SK-N-SH (cell line): ENCODE measurements at regions of chr10 and their contacts with region 1.

Region 1: DNA sequence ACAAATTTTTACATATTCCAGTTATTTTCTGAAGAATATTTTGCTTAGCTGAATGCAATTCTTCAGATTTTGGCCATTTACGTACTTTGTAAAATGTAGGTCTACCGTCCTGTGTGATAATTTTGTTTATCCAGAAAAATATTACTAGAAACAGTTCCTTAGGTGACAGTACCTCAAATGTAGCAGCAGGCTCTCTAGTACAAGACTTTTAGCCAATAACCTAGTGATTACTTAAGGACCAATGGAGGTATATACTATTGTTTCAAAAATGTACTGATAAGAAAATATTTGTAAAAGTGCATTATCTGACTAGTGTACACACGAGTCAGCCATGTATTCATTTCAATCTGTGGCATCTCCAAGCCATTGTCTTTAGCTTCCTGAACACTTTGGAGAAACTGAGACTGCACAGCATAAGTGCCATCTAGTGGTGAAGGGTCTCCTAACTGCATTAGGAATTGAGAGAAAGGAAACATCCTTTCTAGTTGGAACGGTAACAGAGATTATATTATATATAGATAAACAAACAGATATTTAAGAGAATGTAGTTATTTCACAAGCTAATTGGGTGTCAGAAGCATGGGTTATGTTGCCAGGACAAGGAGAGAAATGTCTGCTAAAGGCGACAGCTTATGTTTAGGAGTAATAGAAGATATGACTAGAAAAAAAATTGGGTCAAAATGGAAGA is 23.7 kb downstream of the RTKN2 start:
- DNase-seq: peak; percentile 30
- H3K4me3 ChIP-seq: peak overlapping the region in 1 of 2 experiments; percentile 20; a peak in 1 of 4 replicates
- H3K27ac ChIP-seq: peak overlapping the region; percentile 40 to 58
- H3K4me1 ChIP-seq: peaks cover 2 to 33% of the 10 kb centered on the region in 2 experiments; a peak in 3 of 4 replicates
- H3K27me3 ChIP-seq: no peaks in the 10 kb centered on the region
- CTCF ChIP-seq: peak; percentile 96
- EP300 ChIP-seq: no peak
- RAD21 ChIP-seq: peak; percentile 97

Region 2: DNA sequence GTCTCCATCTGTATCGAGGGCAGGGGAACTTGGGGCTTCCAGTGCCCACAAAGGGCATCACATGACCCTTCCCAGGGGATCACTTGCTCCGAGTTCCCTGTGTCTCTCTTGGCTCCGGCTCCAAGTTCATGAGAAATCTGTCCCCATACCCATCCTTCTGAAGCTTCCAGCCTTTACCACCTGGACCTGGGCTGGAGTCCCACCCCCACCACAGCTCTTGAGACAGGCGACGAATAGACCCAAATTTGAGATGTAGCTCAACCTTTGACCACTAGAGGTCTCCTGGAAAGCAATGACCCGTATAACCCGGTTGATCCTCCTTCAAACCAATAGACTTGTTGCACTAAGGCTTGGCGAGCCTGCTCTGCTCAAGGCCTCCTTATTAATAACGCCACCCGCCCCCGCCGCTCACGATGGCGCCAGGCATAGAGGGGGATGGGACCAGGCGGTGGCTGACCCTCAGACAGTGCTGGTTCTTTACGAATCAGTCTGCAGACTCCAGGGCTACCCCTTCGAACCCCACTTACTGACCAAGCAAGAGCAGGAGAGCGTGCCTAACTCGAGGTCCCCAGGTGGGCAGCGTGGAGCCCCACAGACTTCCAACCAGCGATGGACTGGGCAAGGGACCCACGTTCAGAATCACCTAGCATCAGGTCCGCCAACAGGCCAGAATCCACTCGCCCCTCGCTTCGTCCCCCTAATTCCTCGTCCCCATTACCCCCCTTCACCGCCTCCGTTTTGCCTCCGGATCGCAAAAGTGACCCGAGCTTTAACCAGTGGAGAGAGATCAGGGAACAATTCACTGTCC is 347.9 kb before region 1 on chr10:
- CTCF ChIA-PET with region 1: interaction called, 36 read pairs
- POLR2A ChIA-PET with region 1: no interaction called
- DNase-seq: peak; percentile 67
- H3K4me3 ChIP-seq: no peak overlapping the region; a peak in 1 of 4 replicates
- H3K27ac ChIP-seq: peak overlapping the region in 1 of 2 experiments; percentile 99; a peak in 2 of 4 replicates
- H3K4me1 ChIP-seq: peaks cover 16 to 21% of the 10 kb centered on the region in 2 experiments; a peak in 3 of 4 replicates
- H3K27me3 ChIP-seq: no peaks in the 10 kb centered on the region
- CTCF ChIP-seq: peak; percentile 62
- EP300 ChIP-seq: no peak
- RAD21 ChIP-seq: peak; percentile 54

Region 3: DNA sequence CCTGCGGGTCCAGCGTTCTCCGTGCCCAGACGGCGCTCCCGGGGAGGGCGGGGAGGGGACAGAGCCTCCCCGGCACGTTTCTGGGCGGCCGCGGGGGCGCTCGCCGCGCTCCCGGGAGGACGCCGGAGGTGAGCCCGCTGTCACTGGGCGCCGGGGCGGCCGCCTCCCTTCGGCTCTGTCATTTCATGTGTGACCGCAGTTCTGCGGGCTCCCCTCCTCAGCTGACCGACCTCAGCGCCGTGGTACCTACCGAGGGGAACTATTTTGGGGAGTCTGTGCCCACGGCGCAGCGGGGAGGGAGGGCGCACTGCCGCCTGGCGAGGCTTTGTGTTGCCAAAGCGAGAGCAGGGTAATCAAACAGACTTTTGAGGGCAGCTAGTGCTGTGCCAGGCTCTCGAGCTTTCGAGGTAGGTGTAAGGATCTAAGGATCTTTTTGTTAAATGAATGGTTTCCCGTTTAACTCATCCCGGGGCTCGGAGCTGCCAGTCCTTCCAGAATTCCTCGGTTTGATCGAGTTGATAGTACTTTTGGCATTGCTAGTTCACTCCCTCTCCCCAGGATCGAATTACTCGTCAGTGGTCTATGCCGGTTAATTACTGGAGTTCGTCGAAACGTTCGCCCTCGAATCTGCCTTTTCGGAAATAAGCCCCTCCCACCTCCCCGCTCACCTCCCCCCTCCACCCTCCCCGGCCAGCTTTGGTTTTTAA is 341.6 kb before region 1 on chr10:
- CTCF ChIA-PET with region 1: interaction called, 36 read pairs
- POLR2A ChIA-PET with region 1: no interaction called
- DNase-seq: peak; percentile 78
- H3K4me3 ChIP-seq: peak overlapping the region; percentile 67 to 84
- H3K27ac ChIP-seq: peak overlapping the region; percentile 87 to 95
- H3K4me1 ChIP-seq: peaks cover 15 to 22% of the 10 kb centered on the region in 2 experiments; a peak in 3 of 4 replicates
- H3K27me3 ChIP-seq: no peaks in the 10 kb centered on the region
- CTCF ChIP-seq: peak; percentile 43
- EP300 ChIP-seq: no peak
- RAD21 ChIP-seq: no peak; the same call in 1 of the 2 replicates

Region 4: GRCh38 chr10:62059217-62059920 is 185.6 kb before region 1 on chr10:
- CTCF ChIA-PET with region 1: interaction called, 15 read pairs
- POLR2A ChIA-PET with region 1: no interaction called
- DNase-seq: no peak
- H3K4me3 ChIP-seq: no peak overlapping the region
- H3K27ac ChIP-seq: peak overlapping the region; percentile 73 to 94
- H3K4me1 ChIP-seq: peaks cover 42 to 81% of the 10 kb centered on the region in 2 experiments
- H3K27me3 ChIP-seq: no peaks in the 10 kb centered on the region
- CTCF ChIP-seq: no peak
- EP300 ChIP-seq: peak; percentile 35 to 72; a peak in 3 of 4 replicates
- RAD21 ChIP-seq: no peak

Region 5: GRCh38 chr10:62264702-62265436 is 19.9 kb after region 1 on chr10:
- CTCF ChIA-PET with region 1: interaction called, 17 read pairs
- POLR2A ChIA-PET with region 1: no interaction called
- DNase-seq: peak; percentile 65
- H3K4me3 ChIP-seq: no peak overlapping the region
- H3K27ac ChIP-seq: peak overlapping the region; percentile 19 to 58; a peak in 3 of 4 replicates
- H3K4me1 ChIP-seq: peaks cover 16 to 36% of the 10 kb centered on the region in 2 experiments; a peak in 3 of 4 replicates
- H3K27me3 ChIP-seq: no peaks in the 10 kb centered on the region
- CTCF ChIP-seq: peak; percentile 77
- EP300 ChIP-seq: no peak
- RAD21 ChIP-seq: peak; percentile 67